Gastrocnemius medialis (tissue), 4 donors: ENCODE measurements at regions of chr2 and their contacts with region 1.

Region 1: DNA sequence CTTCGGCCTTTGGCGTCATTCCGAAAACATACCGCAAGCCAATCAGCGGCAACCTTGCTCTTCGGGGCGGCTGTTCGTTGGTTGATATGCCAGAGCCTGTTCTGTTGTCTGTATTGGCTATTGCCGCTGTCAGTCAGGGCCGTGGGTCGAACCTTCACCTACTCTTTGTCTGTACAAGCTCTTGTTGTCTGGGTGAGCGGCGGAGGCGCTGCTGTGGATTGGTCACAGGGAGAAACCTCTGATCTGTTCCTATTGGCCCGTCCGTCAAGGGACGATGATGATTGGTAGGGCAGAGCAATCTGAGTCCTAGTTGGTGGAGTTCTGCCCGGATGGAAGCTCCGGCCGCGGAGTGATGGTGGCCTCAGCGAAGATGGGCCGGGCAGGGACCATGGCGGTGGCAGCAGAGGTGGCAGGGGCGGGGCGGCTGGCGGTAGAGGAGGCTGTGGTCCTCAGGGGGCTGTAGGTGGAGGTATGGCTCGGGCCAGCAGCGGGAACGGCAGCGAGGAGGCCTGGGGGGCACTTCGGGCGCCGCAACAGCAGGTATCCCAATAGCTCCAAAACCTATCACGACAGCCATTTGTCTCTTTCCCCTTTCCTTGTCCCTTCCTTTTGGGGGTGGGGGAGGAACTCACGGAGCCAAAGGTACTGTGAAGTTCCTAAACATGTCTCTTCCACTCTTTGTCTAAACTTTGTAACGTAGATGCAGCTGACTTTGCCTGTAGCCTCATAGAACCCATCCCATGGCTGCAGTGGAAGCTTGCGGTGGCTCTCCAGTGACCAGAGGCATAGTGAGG is at the start of gene WBP1:
- DNase-seq: peak; percentile 100
- ATAC-seq: peak; percentile 92 to 93
- H3K4me3 ChIP-seq: peak within 1 kb of the TSS; percentile 67 to 92 (median 71)
- H3K27ac ChIP-seq: peak within 1 kb of the TSS; percentile 84 to 94 (median 88)
- H3K4me1 ChIP-seq: peaks cover 24 to 32% of the 10 kb centered on the region in 2 donors
- H3K27me3 ChIP-seq: no peaks in the 10 kb centered on the region
- CTCF ChIP-seq: no peak
- POLR2A ChIP-seq: peak; percentile 22 to 23
- total RNA-seq, gene WBP1: 10.7 to 17.5 (median 16.5) TPM

Region 2: GRCh38 chr2:73385595-73386341 is 1072.6 kb before region 1 on chr2 and contains the start of gene ALMS1:
- in situ Hi-C with region 1: no loop called
- intact Hi-C with region 1: loop called (anchors 5 kb)
- DNase-seq: peak; percentile 68 to 84
- ATAC-seq: peak; percentile 91
- H3K4me3 ChIP-seq: peak within 1 kb of the TSS; percentile 81 to 97 (median 92)
- H3K27ac ChIP-seq: peak within 1 kb of the TSS; percentile 88 to 96 (median 91)
- H3K4me1 ChIP-seq: peaks cover 12 to 23% of the 10 kb centered on the region in 2 donors
- H3K27me3 ChIP-seq: no peaks in the 10 kb centered on the region
- CTCF ChIP-seq: peak in 3 of 5 experiments; percentile 13 to 53 (median 33)
- POLR2A ChIP-seq: peak in 1 of 2 donors; percentile 26
- total RNA-seq, gene ALMS1: 10.0 to 18.1 (median 13.9) TPM

Region 3: GRCh38 chr2:73926493-73927338 is 531.6 kb before region 1 on chr2 and contains the start of gene DGUOK:
- in situ Hi-C with region 1: no loop called
- intact Hi-C with region 1: loop called (anchors 1 kb)
- DNase-seq: peak; percentile 96 to 97
- ATAC-seq: peak; percentile 100
- H3K4me3 ChIP-seq: peak within 1 kb of the TSS; percentile 69 to 91 (median 82)
- H3K27ac ChIP-seq: peak within 1 kb of the TSS; percentile 82 to 93 (median 91)
- H3K4me1 ChIP-seq: peaks cover 15 to 17% of the 10 kb centered on the region in 2 donors
- H3K27me3 ChIP-seq: peaks cover 0 to under 1% (median 0%) of the 10 kb centered on the region in 3 donors
- CTCF ChIP-seq: no peak
- POLR2A ChIP-seq: peak; percentile 82 to 90
- total RNA-seq, gene DGUOK: 10.2 to 25.2 (median 20.3) TPM

Region 4: GRCh38 chr2:74391580-74392448 is 66.5 kb before region 1 on chr2:
- in situ Hi-C with region 1: no loop called
- intact Hi-C with region 1: loop called (anchors 1 kb)
- DNase-seq: peak; percentile 85 to 86
- ATAC-seq: peak; percentile 95 to 96
- H3K4me3 ChIP-seq: peak overlapping the region; percentile 79 to 83 (median 82)
- H3K27ac ChIP-seq: peak overlapping the region; percentile 84 to 94 (median 89)
- H3K4me1 ChIP-seq: peaks cover 40 to 41% of the 10 kb centered on the region in 2 donors
- H3K27me3 ChIP-seq: no peaks in the 10 kb centered on the region
- CTCF ChIP-seq: peak; percentile 83 to 98 (median 93)
- POLR2A ChIP-seq: peak in 1 of 2 donors; percentile 23

Region 5: GRCh38 chr2:74482801-74483674 is 24.7 kb after region 1 on chr2 and contains the starts of genes CCDC142 and TTC31:
- in situ Hi-C with region 1: no loop called
- intact Hi-C with region 1: loop called (anchors 1 kb)
- DNase-seq: peak; percentile 96 to 97
- ATAC-seq: peak; percentile 99 to 100
- H3K4me3 ChIP-seq: peak within 1 kb of the TSS; percentile 82 to 97 (median 87)
- H3K27ac ChIP-seq: peak within 1 kb of the TSS; percentile 83 to 94 (median 88)
- H3K4me1 ChIP-seq: peaks cover 24 to 25% of the 10 kb centered on the region in 2 donors
- H3K27me3 ChIP-seq: no peaks in the 10 kb centered on the region
- CTCF ChIP-seq: peak; percentile 74 to 90 (median 85)
- POLR2A ChIP-seq: peak; percentile 25 to 45
- total RNA-seq, gene CCDC142: 5.5 to 7.3 (median 6.0) TPM
- total RNA-seq, gene TTC31: 6.1 to 9.6 (median 7.7) TPM

Region 6: GRCh38 chr2:74529357-74530238 is 71.3 kb after region 1 on chr2 and contains the starts of genes AUP1 and HTRA2:
- in situ Hi-C with region 1: no loop called
- intact Hi-C with region 1: loop called (anchors 1 kb)
- DNase-seq: peak; percentile 98
- ATAC-seq: peak; percentile 91 to 94
- H3K4me3 ChIP-seq: peak within 1 kb of the TSS; percentile 80 to 100 (median 93)
- H3K27ac ChIP-seq: peak within 1 kb of the TSS; percentile 84 to 94 (median 89)
- H3K4me1 ChIP-seq: peaks cover 19 to 28% of the 10 kb centered on the region in 2 donors
- H3K27me3 ChIP-seq: no peaks in the 10 kb centered on the region
- CTCF ChIP-seq: no peak
- POLR2A ChIP-seq: peak; percentile 70 to 89
- total RNA-seq, gene AUP1: 112 to 148 (median 115) TPM
- total RNA-seq, gene HTRA2: 24.2 to 38.5 (median 29.4) TPM